HCT116 (cell line): ENCODE measurements at regions of chr11 and their contacts with region 1.

Region 1: GRCh38 chr11:123407130-123407995 is 22.7 kb upstream of the GRAMD1B start:
- DNase-seq: peak; percentile 74
- ATAC-seq: peak; percentile 97
- H3K4me3 ChIP-seq: no peak overlapping the region
- H3K27ac ChIP-seq: no peak overlapping the region
- H3K4me1 ChIP-seq: no peaks in the 10 kb centered on the region
- H3K27me3 ChIP-seq: 0 out of 2 replicates have a peak, but pooled peaks cover 9% of the 10 kb centered on the region
- CTCF ChIP-seq: peak; percentile 85 to 95 (median 88)
- POLR2A ChIP-seq: no peak
- RAD21 ChIP-seq: peak; percentile 95

Region 2: GRCh38 chr11:123301696-123302400 is 105.5 kb before region 1 on chr11:
- CTCF ChIA-PET with region 1: interaction called, 4 read pairs
- POLR2A ChIA-PET with region 1: no interaction called
- RAD21 ChIA-PET with region 1: no interaction called
- intact Hi-C with region 1: loop called (anchors 5 kb)
- DNase-seq: peak; percentile 18
- ATAC-seq: peak; percentile 95
- H3K4me3 ChIP-seq: peak overlapping the region; percentile 9 to 14; a peak in 3 of 4 replicates
- H3K27ac ChIP-seq: no peak overlapping the region
- H3K4me1 ChIP-seq: peaks cover 2 to 15% of the 10 kb centered on the region in 2 experiments; a peak in 2 of 4 replicates
- H3K27me3 ChIP-seq: no peaks in the 10 kb centered on the region
- CTCF ChIP-seq: peak; percentile 53 to 89 (median 76); a peak in 5 of 6 replicates
- POLR2A ChIP-seq: no peak
- RAD21 ChIP-seq: peak; percentile 76

Region 3: GRCh38 chr11:123434262-123434661 is 26.9 kb after region 1 on chr11:
- CTCF ChIA-PET with region 1: interaction called, 19 read pairs
- POLR2A ChIA-PET with region 1: interaction called, 3 read pairs
- RAD21 ChIA-PET with region 1: no interaction called
- intact Hi-C with region 1: no loop called
- DNase-seq: peak; percentile 43
- ATAC-seq: peak; percentile 83
- H3K4me3 ChIP-seq: no peak overlapping the region
- H3K27ac ChIP-seq: no peak overlapping the region
- H3K4me1 ChIP-seq: no peaks in the 10 kb centered on the region
- H3K27me3 ChIP-seq: no peaks in the 10 kb centered on the region
- CTCF ChIP-seq: peak; percentile 17 to 56 (median 43); a peak in 5 of 6 replicates
- POLR2A ChIP-seq: no peak
- RAD21 ChIP-seq: peak; percentile 40; the same call in 1 of the 2 replicates